Right ventricle myocardium inferior (tissue), 1 donor: ENCODE measurements at regions of chr16 and their contacts with region 1.

Region 1: GRCh38 chr16:1420111-1420540 is 421 bp downstream of the UQCC4 start:
- DNase-seq: no peak
- ATAC-seq: no peak

Region 2: DNA sequence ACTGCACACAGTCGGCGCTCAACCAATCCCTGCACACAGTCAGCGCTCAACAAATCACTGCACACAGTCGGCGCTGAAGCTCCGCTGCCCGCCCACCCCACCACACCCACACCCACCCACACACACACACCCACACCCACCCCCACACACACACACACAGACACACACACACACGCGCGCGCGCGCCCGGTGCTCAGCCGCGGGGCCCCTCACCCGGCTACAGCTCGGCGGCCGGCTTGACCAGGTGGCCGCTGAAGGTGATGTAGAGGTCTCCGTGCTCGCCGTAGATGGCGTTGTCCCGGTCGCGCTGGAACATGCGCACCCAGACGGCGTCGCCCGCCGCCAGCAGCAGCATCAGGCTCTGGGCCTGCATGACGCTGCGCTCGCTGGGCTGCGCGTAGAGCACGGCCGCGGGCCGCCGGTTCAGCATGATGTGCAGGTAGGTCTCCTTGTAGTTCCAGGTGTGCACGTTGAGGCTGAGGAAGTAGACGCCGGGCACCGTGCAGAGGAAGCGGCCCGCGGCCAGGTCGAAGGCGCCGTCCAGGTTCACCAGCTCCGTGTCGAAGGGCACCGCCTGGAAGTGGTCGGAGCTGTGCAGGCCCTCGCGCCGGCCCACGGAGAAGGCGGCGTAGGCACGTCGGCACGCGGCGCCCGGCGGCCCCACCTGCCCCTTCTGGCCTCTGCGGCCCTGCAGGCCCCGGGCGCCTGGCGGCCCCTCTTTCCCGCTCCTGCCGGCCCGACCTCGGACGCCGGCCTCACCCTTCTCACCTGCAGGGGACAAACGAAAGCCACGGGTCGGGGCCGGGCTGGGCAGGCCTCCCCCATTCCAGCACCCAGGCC is 326.6 kb before region 1 on chr16:
- intact Hi-C with region 1: no loop called
- DNase-seq: no peak
- ATAC-seq: no peak

Region 3: DNA sequence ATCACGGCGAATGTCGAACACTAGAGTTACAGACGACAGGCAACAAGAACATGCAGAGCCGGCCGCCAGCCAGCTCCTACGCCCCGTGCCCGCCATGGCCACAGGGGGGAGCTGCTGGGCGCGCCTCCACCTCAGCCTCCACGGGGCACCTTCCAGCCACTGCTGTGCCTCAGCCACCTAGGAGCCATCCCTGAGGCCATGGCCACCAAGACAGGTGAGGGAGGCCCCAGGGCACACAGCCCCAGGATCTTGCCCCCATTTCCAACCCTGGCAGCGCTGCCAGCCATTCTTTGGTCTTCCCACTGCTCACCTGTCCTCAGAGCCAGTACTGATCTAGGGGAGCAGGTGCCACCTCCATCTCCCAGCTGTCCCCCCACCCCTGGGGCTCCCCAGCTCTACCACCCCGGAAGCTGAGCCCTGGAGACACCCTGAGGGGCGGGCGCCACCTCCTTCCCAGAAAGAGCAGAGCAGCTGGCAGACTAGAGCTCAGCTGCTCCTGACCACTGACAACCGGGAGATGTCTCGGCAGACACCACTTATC is 56.6 kb before region 1 on chr16:
- intact Hi-C with region 1: loop called (anchors 5 kb)
- DNase-seq: peak; percentile 81
- ATAC-seq: peak; percentile 58

Region 4: DNA sequence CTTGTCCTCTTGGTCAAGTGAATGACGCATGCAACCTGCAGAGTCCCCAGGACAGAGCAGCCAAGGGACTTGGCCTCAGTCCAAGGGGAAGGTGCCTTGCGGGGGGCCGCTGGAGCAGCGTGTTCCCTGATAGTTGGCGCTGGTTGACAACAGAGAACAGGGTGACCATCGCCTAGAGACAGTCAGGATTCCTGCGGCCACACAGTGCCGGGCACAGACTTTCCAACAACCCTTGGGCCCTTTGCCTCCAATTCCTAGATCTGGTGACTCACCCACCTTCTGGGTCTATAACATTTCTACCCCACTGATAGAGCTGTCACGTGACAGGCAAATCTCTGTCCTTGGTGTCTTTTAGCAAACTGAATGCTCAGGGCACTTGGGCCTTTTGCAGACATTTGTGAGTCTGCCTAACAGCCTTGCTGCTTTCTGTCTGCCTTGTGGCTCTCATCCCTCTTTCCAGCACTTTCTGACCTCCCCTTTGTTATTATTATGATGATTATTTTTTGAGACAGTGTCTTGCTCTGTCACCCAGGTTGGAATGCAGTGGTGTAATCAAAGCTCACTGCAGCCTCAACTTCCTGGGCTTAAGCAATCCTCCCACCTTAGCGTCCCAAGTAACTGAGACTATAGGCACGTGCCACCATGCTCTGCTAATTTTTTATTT is 1027.9 kb after region 1 on chr16:
- intact Hi-C with region 1: no loop called
- DNase-seq: no peak
- ATAC-seq: no peak